BJ (cell line): ENCODE measurements at regions of chr3 and their contacts with region 1.

Region 1: GRCh38 chr3:32934150-32934742 is 17.2 kb upstream of the CCR4 start:
- DNase-seq: no peak
- H3K4me3 ChIP-seq: no peak overlapping the region
- H3K27me3 ChIP-seq: no peaks in the 10 kb centered on the region
- CTCF ChIP-seq: peak; percentile 76

Region 2: GRCh38 chr3:32733631-32734229 is 200.5 kb before region 1 on chr3:
- CTCF ChIA-PET with region 1: interaction called, 29 read pairs
- POLR2A ChIA-PET with region 1: no interaction called
- DNase-seq: peak; percentile 19
- H3K4me3 ChIP-seq: no peak overlapping the region
- H3K27me3 ChIP-seq: no peaks in the 10 kb centered on the region
- CTCF ChIP-seq: peak; percentile 60

Region 3: DNA sequence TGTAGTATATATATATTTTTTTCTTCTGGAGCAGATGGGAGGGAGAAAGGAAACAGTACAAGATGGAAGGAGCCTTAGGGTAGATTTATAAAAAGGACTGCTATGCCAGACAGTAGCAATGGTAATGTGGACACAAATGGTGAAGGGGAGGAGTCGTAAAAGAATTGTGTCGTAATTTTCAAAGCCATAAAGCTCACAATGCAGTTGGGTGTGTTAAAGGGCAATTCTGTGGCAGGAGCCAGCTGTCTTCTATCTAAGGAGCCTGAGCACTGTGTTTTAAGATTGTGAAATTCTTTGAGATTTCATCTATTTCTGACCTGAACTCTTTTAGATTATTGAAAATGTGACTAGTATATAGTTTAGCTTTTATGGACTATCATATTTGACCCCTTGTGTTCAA is 190.3 kb before region 1 on chr3:
- CTCF ChIA-PET with region 1: interaction called, 10 read pairs
- POLR2A ChIA-PET with region 1: no interaction called
- DNase-seq: peak; percentile 20
- H3K4me3 ChIP-seq: no peak overlapping the region
- H3K27me3 ChIP-seq: no peaks in the 10 kb centered on the region
- CTCF ChIP-seq: no peak

Region 4: DNA sequence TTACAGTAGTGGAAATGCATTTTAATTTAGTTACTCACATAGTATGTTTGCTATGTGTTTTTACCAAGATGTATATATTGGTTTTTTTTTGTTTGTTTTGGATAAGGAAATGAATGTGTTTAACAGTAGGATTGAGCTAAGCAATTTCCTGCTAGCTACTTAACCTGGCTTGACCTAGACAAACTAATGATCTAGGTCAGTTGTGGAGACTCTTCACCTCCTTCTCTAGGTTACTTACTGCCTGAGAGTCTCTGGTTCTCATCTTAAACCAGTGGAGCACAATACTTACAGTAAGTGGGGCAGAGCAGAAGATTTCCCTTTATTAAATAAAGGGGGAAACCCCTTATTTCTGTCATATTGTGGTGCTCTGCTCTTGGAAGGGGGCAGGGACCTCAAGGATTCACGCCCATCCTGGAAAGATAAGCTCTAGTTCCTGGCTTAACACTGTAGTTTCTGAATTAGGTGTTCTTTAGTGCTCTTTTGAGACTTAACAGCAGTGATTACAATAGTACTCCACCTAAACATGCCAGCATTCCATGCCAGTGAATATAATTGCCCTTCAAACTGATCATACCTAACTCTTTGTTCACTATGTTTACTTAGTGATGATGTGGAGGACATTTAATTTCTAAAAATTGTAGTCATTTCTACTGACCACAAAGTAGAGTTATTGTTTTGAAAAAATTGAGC is 426.0 kb after region 1 on chr3:
- CTCF ChIA-PET with region 1: no interaction called
- POLR2A ChIA-PET with region 1: no interaction called
- DNase-seq: no peak
- H3K4me3 ChIP-seq: no peak overlapping the region
- H3K27me3 ChIP-seq: no peaks in the 10 kb centered on the region
- CTCF ChIP-seq: no peak